ENCODE measurements at regions of chr16 and their contacts with region 1.

Region 1: DNA sequence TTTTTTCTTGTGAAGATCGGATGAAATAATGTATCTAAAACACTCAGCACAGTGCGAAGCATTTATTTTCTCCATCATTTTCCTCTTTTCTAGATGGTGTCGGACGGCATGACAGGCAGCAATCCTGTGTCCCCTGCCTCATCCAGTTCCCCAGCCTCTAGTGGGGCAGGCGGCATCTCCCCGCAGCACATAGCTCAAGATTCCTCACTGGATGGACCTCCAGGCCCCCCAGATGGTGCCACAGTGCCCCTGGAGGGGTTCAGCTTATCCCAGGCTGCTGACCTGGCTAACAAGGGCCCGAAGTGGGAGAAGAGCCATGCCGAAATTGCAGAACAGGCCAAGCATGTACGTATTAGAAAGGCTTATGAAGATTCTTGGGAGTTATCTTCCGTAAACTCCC is 5.0 kb downstream of the SRCAP start:
- DNase-seq: no peak
- H3K4me3 Mint-ChIP-seq: no peak overlapping the region
- H3K27ac Mint-ChIP-seq: no peak overlapping the region
- H3K4me1 Mint-ChIP-seq: peaks cover 8% of the 10 kb centered on the region
- H3K27me3 Mint-ChIP-seq: no peaks in the 10 kb centered on the region
- CTCF ChIP-seq: no peak

Region 2: GRCh38 chr16:30722443-30722842 is 18.5 kb after region 1 on chr16:
- CTCF ChIA-PET with region 1: interaction called, 10 read pairs
- POLR2A ChIA-PET with region 1: interaction called, 3 read pairs
- intact Hi-C with region 1: no loop called
- DNase-seq: no peak
- H3K4me3 Mint-ChIP-seq: no peak overlapping the region
- H3K27ac Mint-ChIP-seq: no peak overlapping the region
- H3K4me1 Mint-ChIP-seq: peaks cover 5% of the 10 kb centered on the region
- H3K27me3 Mint-ChIP-seq: no peaks in the 10 kb centered on the region
- CTCF ChIP-seq: no peak

Measured in MCF 10A (cell line).